ENCODE measurements at regions of chr1 and their contacts with region 1.

Region 1: GRCh38 chr1:18913065-18913835 is 10.9 kb upstream of the ALDH4A1 start:
- DNase-seq: peak; percentile 74
- H3K4me3 Mint-ChIP-seq: no peak overlapping the region
- H3K27ac Mint-ChIP-seq: peak overlapping the region; percentile 44
- H3K4me1 Mint-ChIP-seq: peaks cover 5% of the 10 kb centered on the region
- H3K27me3 Mint-ChIP-seq: no peaks in the 10 kb centered on the region

Region 2: GRCh38 chr1:18549906-18550305 is 363.3 kb before region 1 on chr1:
- CTCF ChIA-PET with region 1: no interaction called
- POLR2A ChIA-PET with region 1: no interaction called
- DNase-seq: no peak
- H3K4me3 Mint-ChIP-seq: no peak overlapping the region
- H3K27ac Mint-ChIP-seq: no peak overlapping the region
- H3K4me1 Mint-ChIP-seq: no peaks in the 10 kb centered on the region
- H3K27me3 Mint-ChIP-seq: peaks cover 11% of the 10 kb centered on the region

Region 3: DNA sequence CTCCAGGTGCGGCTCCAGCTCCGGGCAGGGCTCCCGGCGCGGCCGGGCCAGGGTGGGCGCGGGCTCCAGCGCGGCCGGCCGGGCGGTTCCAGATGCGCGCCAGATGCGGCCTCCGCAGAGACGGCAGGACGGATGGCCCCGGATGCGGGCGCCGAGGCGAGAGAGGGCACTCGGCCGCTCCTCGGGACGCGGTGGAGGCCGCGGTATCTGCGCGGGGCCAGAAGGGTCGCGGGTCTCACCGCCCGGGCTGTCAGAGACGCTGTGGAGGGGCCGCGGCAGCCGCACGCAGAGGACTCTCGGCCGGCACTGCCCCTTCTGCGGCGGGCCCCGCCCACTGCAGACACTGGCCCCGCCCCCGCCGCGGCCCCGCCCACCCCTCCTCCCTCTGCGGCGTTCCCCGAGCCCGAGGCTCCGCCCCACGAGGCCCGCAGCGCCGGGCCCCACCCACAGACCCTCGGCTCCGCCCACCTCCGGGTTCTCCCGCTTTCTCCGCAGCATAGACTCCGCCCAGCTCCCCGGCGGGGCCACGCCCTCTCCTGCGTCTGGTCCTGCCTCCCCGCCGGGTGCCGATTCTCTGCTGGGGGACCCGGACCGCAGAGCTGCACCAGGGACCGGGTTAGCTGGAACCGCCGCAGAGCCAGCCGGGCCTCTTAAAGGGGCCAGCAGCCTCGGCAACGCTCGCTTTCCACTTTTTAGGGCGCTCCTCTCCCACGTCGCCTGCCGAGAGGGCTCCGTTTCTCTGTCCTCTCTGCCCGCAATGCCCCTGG is 43.3 kb after region 1 on chr1 and contains the start of gene IFFO2:
- CTCF ChIA-PET with region 1: interaction called, 123 read pairs
- POLR2A ChIA-PET with region 1: interaction called, 13 read pairs
- DNase-seq: peak; percentile 97
- H3K4me3 Mint-ChIP-seq: peak within 1 kb of the TSS; percentile 83
- H3K27ac Mint-ChIP-seq: peak within 1 kb of the TSS; percentile 23
- H3K4me1 Mint-ChIP-seq: peaks cover 57% of the 10 kb centered on the region
- H3K27me3 Mint-ChIP-seq: peaks cover 24% of the 10 kb centered on the region
- total RNA-seq, gene IFFO2: 19.9 to 22.7 TPM

Region 4: GRCh38 chr1:18972531-18972930 is 59.3 kb after region 1 on chr1:
- CTCF ChIA-PET with region 1: interaction called, 12 read pairs
- POLR2A ChIA-PET with region 1: interaction called, 4 read pairs
- DNase-seq: no peak
- H3K4me3 Mint-ChIP-seq: no peak overlapping the region
- H3K27ac Mint-ChIP-seq: no peak overlapping the region
- H3K4me1 Mint-ChIP-seq: no peaks in the 10 kb centered on the region
- H3K27me3 Mint-ChIP-seq: peaks cover 16% of the 10 kb centered on the region